SK-N-SH (cell line): ENCODE measurements at regions of chr9 and their contacts with region 1.

Region 1: GRCh38 chr9:35611230-35611797 is 6.3 kb downstream of the TESK1 start:
- DNase-seq: peak; percentile 77
- H3K4me3 ChIP-seq: no peak overlapping the region
- H3K27ac ChIP-seq: no peak overlapping the region
- H3K4me1 ChIP-seq: peaks cover 7 to 10% of the 10 kb centered on the region in 2 experiments; a peak in 1 of 4 replicates
- H3K27me3 ChIP-seq: 0 out of 2 replicates have a peak, but pooled peaks cover under 1% of the 10 kb centered on the region
- CTCF ChIP-seq: peak; percentile 72
- EP300 ChIP-seq: no peak
- RAD21 ChIP-seq: 0 out of 2 replicates have a peak, but pooled peaks have one; percentile 17

Region 2: DNA sequence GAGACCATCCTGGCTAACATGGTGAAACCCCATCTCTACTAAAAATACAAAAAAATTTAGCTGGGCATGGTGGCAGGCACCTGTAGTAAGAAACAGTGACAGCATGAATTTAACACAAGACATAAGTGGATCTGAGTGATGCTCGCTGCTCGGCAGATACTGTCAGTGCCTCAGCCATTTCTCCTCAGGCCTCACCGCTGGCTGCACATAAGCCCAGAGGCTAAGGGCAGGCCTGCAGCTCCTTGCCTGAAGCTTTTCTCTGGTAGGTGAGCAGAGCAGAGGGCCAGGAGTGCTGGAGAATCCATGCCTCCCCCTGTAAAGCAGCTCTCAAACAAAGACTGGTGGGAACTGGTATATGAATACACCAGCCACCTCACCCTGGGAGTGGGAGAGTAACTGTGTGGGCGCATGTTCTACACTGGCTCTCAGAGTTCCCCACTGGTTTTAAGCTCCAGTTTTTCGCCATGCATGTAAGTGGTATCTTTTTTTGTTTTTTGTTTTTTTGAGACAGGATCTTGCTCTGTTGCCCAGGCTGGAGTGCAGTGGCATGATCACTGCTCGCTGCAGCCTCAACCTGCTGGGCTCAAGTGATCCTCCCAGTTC is 17.2 kb after region 1 on chr9:
- CTCF ChIA-PET with region 1: interaction called, 32 read pairs
- POLR2A ChIA-PET with region 1: no interaction called
- DNase-seq: no peak
- H3K4me3 ChIP-seq: no peak overlapping the region
- H3K27ac ChIP-seq: no peak overlapping the region
- H3K4me1 ChIP-seq: no peaks in the 10 kb centered on the region
- H3K27me3 ChIP-seq: no peaks in the 10 kb centered on the region
- CTCF ChIP-seq: no peak
- EP300 ChIP-seq: no peak
- RAD21 ChIP-seq: no peak